Activated CD8-positive, alpha-beta T cell treated with anti-CD3 and anti-CD28 coated beads, Interleukin-2, amount 10 ng/mL, durations not matched to agents 7 days and 5 days (primary cell): ENCODE measurements at regions of chr1 and their contacts with region 1.

Region 1: GRCh38 chr1:111507411-111508201 is 4.2 kb upstream of the ADORA3 start:
- DNase-seq: peak; percentile 82
- ATAC-seq: peak; percentile 66
- H3K4me3 Mint-ChIP-seq: peak overlapping the region; percentile 69
- H3K27ac Mint-ChIP-seq: peak overlapping the region; percentile 92
- H3K4me1 Mint-ChIP-seq: peaks cover 57% of the 10 kb centered on the region
- H3K27me3 Mint-ChIP-seq: no peaks in the 10 kb centered on the region

Region 2: GRCh38 chr1:111454859-111455641 is 52.6 kb before region 1 on chr1:
- CTCF ChIA-PET with region 1: interaction called, 34 read pairs
- POLR2A ChIA-PET with region 1: interaction called, 3 read pairs
- DNase-seq: peak; percentile 39
- ATAC-seq: peak; percentile 39
- H3K4me3 Mint-ChIP-seq: peak overlapping the region; percentile 66
- H3K27ac Mint-ChIP-seq: peak overlapping the region; percentile 91
- H3K4me1 Mint-ChIP-seq: peaks cover 71% of the 10 kb centered on the region
- H3K27me3 Mint-ChIP-seq: no peaks in the 10 kb centered on the region

Region 3: GRCh38 chr1:111497592-111497991 is 10.0 kb before region 1 on chr1:
- CTCF ChIA-PET with region 1: interaction called, 66 read pairs
- POLR2A ChIA-PET with region 1: interaction called, 21 read pairs
- DNase-seq: no peak
- ATAC-seq: no peak
- H3K4me3 Mint-ChIP-seq: no peak overlapping the region
- H3K27ac Mint-ChIP-seq: peak overlapping the region; percentile 26
- H3K4me1 Mint-ChIP-seq: peaks cover 30% of the 10 kb centered on the region
- H3K27me3 Mint-ChIP-seq: no peaks in the 10 kb centered on the region

Region 4: DNA sequence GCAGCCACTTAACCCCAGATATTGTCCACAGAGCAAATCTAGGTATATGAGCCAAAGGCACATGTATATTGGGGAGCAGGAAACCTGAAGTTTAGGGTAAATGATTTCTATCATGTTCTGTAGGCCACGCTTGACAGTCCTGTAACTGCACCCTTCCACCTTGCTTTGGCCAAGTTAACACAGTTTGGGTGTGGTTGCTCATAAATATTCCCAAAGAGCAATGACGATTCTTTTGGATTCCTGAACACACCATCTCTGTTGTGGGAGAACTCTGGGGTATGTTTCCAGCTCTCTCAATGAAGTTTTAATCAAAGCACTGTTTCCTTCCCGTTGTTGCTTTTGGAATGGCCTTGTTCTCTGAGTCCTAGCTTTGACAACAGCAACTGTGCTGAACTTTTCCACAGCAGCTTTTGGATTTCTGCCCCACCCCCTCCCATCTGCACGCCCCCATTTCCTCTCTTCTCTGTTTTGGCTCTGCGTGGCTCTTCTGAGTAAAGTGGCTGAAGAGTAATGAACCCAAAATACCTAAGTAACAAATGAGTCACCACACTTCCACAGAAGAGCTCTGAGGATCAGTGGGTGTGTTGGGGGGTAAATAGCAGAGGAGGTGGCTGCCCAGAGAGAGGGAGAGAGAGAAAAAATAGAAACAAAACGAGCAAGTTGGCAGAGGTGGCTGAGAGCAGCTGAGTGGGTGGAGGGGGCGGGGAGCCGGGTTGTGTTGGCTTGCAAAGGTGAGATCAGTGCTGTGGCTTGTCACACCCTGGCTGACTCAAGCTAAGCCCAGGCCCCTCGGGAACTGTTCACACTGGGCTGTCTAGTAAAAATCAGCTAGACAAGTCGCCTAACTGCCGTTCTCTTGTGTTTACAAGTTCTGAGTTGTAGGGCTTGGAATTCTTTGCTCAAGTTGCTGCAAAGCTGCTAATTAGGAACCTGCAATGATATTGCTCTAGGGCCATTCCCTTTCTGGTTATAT is 85.1 kb after region 1 on chr1:
- CTCF ChIA-PET with region 1: interaction called, 57 read pairs
- POLR2A ChIA-PET with region 1: interaction called, 53 read pairs
- DNase-seq: peak; percentile 96
- ATAC-seq: peak; percentile 96
- H3K4me3 Mint-ChIP-seq: peak overlapping the region; percentile 38
- H3K27ac Mint-ChIP-seq: peak overlapping the region; percentile 82
- H3K4me1 Mint-ChIP-seq: peaks cover 66% of the 10 kb centered on the region
- H3K27me3 Mint-ChIP-seq: no peaks in the 10 kb centered on the region

Region 5: GRCh38 chr1:111648806-111649205 is 141.2 kb after region 1 on chr1:
- CTCF ChIA-PET with region 1: interaction called, 26 read pairs
- POLR2A ChIA-PET with region 1: interaction called, 3 read pairs
- DNase-seq: no peak
- ATAC-seq: no peak
- H3K4me3 Mint-ChIP-seq: no peak overlapping the region
- H3K27ac Mint-ChIP-seq: no peak overlapping the region
- H3K4me1 Mint-ChIP-seq: peaks cover 66% of the 10 kb centered on the region
- H3K27me3 Mint-ChIP-seq: no peaks in the 10 kb centered on the region

Region 6: GRCh38 chr1:111704776-111705175 is 197.2 kb after region 1 on chr1:
- CTCF ChIA-PET with region 1: interaction called, 17 read pairs
- POLR2A ChIA-PET with region 1: interaction called, 5 read pairs
- DNase-seq: no peak
- ATAC-seq: no peak
- H3K4me3 Mint-ChIP-seq: no peak overlapping the region
- H3K27ac Mint-ChIP-seq: no peak overlapping the region
- H3K4me1 Mint-ChIP-seq: peaks cover 6% of the 10 kb centered on the region
- H3K27me3 Mint-ChIP-seq: no peaks in the 10 kb centered on the region

Region 7: GRCh38 chr1:111769517-111770146 is 262.0 kb after region 1 on chr1:
- CTCF ChIA-PET with region 1: interaction called, 61 read pairs
- POLR2A ChIA-PET with region 1: no interaction called
- DNase-seq: peak; percentile 64
- ATAC-seq: no peak
- H3K4me3 Mint-ChIP-seq: no peak overlapping the region
- H3K27ac Mint-ChIP-seq: no peak overlapping the region
- H3K4me1 Mint-ChIP-seq: no peaks in the 10 kb centered on the region
- H3K27me3 Mint-ChIP-seq: no peaks in the 10 kb centered on the region